Body of pancreas (tissue), 4 donors: ENCODE measurements at regions of chr16 and their contacts with region 1.

Region 1: DNA sequence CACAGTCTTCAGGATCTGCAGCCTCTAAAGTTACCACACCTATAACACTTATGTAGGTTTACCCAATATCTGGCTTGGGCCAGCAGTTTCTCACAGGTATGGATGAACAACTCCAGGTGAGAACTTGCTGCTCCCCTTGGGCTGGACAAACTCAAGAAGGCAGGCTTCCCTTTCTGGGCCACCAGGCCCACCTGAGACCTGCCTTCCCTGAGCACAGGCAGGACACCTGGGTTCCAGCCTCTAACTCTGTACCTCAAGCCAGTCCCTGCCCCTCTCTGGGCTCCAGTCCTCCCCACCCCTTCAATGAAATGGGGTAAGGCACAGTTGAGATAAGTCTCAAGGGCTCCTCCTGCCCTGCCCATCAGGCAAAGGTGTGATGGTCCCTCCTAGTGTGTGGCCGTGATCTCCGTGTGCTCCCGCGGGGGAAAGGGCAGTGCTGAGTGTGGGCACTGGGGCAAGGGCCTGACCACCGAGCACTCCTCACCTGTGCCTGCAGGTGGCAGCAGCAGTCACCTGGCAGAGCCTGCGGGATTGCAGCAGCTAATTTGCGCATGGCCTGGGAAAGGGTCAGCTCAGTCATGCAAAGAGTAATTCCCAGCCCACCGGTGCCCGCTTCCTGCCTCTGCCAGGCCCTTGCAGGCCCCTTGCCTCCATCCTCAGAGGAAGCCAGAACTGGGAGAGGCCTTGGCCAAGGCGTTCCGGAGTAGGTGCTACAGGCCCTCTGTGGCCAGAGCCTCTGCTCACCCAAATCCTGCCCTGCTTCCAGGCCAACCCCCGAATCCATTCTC is 28.2 kb upstream of the ADGRG1 start:
- DNase-seq: peak; percentile 83 to 88 (median 86)
- ATAC-seq: peak; percentile 94
- H3K4me3 ChIP-seq: no peak overlapping the region
- H3K27ac ChIP-seq: no peak overlapping the region
- H3K4me1 ChIP-seq: peaks cover 35% of the 10 kb centered on the region
- H3K27me3 ChIP-seq: no peaks in the 10 kb centered on the region
- CTCF ChIP-seq: peak; percentile 79 to 96 (median 92)
- POLR2A ChIP-seq: no peak

Region 2: DNA sequence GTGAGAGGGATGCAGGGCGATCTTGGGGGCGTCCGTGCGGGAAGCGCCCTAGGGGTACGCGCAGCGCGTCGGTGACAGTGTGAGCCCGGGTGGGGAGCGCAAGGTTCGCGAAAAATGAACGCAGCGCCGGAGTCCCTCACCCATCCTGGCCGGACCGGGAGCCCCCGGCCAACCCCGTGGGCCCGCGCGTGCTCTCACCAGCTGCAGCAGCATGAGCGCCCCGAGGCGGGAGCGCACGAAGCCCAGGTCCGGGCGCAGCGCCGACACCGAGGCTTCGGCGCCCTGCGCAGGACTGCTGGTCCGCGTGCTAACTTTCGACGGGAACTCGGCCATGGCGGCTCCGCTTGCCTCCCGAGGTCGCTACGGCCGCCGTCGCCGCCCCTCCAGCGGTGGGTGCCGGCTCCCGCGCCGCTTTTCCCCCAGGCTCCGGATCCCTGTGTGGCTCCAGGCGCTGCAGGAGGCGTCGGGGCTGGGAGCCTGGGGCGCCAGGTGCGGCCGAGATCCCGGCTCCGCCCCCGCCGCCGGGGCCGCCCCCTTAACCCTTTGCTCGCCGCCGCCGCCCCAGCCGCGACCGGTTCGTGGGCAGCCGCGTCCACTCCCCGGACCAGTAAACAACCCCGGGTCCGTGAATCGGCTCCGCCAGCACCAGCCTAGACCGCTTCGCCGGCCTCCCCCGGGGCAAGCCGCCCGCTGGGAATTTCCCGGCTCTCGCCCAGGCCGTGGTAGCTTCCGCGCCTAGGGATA is 315.9 kb before region 1 on chr16 and contains the start of gene PLLP:
- intact Hi-C with region 1: no loop called
- DNase-seq: peak; percentile 62 to 75 (median 68)
- ATAC-seq: peak; percentile 79
- H3K4me3 ChIP-seq: peak within 1 kb of the TSS; percentile 80 to 90
- H3K27ac ChIP-seq: peak within 1 kb of the TSS; percentile 47 to 84 (median 82)
- H3K4me1 ChIP-seq: peaks cover 44% of the 10 kb centered on the region
- H3K27me3 ChIP-seq: no peaks in the 10 kb centered on the region
- CTCF ChIP-seq: no peak
- POLR2A ChIP-seq: peak; percentile 48 to 58 (median 56)
- total RNA-seq, gene PLLP: 32.9 to 43.2 TPM

Region 3: DNA sequence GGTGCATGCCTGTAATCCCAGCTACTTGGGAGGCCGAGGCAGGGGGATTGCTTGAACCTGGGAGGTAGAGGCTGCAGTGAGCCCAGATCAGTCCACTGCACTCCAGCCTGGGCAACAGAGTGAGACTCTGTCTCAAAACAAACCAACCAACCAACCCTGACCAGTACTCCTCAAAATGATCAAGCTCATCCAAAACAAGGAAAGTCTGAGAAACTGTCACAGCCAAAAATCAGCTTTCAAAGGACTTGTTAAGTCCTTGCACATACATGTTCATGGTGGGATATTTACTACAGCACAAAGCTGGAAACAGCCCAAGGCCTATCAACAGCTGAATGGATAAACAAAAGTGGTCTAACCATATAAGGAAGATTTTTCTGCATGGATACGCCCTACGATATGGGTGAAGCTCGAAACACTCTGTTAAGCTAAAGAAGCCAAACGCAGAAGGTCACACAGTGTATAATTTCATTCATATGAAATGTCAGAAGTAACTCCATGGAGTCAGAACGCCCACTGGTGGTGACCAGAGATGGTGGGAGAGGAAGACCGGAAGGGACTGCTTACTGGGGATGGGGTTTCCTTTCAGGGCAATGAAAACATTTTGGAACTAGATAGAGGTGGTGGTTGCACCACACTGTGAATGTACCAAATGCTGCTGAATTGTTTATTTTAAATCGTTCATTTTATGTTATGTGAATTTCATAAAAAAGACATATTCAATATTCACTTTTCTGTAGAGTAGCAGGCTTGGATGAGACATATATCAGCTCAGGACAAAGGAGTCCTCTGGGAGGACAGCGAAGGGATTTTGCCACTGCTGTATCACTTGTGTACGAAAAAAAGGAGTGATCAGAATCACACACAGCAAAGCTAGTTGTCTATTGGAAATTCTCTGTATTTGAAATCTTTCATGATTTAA is 178.0 kb before region 1 on chr16:
- intact Hi-C with region 1: no loop called
- DNase-seq: peak; percentile 54 to 73 (median 66)
- ATAC-seq: peak; percentile 62
- H3K4me3 ChIP-seq: no peak overlapping the region
- H3K27ac ChIP-seq: no peak overlapping the region
- H3K4me1 ChIP-seq: peaks cover 14% of the 10 kb centered on the region
- H3K27me3 ChIP-seq: no peaks in the 10 kb centered on the region
- CTCF ChIP-seq: peak; percentile 29 to 73 (median 56)
- POLR2A ChIP-seq: no peak

Region 4: DNA sequence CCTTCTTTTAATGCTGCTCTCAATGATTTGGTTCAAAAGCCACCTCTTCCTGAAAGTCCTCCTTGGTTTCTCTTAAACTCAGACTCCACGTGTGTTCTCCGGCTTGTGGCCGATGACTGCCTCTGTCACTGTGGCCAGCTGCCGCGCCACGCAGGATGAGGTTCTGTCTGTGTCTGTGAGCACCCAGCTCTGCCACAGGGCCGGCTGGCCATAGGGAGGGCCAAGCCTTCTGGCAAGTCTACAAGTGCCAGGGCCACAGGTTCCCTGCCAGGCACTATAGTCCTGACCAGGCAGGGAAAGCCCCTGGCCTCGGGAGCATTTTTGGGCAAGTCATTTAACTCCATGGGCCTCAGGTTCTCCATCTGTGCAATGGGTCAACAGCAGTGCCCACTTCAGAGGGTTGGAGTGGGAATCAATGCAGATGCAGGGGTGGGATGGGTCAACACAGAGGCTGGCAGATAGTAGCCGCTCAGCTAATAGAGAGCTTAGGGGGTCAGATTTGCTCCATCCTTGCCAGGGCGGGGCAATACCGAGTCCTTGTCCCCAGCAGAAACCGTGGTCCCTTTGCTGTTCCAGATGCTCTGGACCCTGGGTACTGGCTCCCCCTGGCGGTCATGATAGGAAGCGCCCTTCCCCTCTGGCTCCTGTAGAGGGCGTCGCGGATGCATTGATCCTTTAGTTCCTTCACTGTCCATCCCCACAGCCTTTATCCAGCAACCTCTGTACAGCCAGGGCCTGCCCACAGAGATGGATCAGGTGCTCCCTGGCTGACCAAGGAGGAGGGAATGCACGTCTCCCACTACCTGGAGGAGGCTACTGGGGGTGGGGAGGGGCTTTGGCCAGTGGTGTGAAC is 48.6 kb after region 1 on chr16:
- intact Hi-C with region 1: loop called (anchors 2 kb)
- DNase-seq: peak; percentile 78 to 89 (median 84)
- ATAC-seq: peak; percentile 84
- H3K4me3 ChIP-seq: no peak overlapping the region
- H3K27ac ChIP-seq: peak overlapping the region in 2 of 4 donors; percentile 6 to 42
- H3K4me1 ChIP-seq: peaks cover 6% of the 10 kb centered on the region
- H3K27me3 ChIP-seq: no peaks in the 10 kb centered on the region
- CTCF ChIP-seq: peak; percentile 99 to 100 (median 100)
- POLR2A ChIP-seq: no peak

Region 5: DNA sequence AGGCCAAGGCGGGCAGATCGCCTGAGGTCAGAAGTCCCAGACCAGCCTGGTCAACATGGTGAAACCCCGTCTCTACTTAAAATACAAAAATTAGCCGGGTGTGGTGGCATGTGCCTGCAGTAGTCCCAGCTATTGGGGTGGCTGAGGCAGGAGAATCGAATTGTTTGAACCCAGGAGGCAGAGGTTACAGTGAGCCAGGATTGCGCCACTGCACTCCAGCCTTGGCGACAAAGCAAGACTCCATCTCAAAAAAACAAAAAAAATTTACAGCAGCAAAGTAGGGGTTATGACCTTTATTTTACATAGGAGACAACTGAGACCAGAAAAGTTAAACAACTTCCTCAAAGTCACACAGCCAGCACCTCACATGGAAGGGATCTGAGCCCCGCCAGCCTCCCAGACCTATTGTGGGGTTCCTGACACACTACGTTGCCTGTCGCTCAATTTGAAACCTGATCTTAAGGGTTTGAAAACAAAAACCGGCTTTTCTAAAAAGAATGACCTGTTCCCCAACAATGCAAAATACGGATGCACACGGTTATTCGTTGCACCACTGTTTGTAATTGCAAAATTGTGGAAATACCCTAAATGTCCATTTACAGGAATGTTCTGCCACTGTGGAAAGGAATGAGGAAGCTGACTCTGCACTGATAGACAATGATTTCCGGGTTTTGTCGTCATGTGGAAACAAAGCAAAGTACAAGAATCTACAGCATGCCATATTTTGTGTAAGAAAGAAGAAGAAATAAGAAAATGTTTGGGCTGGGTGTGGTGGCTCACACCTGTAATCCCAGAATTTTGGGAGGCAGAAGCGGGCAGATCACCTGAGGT is 293.5 kb after region 1 on chr16:
- intact Hi-C with region 1: no loop called
- DNase-seq: peak; percentile 25 to 69 (median 40)
- ATAC-seq: peak; percentile 83
- H3K4me3 ChIP-seq: no peak overlapping the region
- H3K27ac ChIP-seq: peak overlapping the region; percentile 46 to 94 (median 84)
- H3K4me1 ChIP-seq: peaks cover 41% of the 10 kb centered on the region
- H3K27me3 ChIP-seq: no peaks in the 10 kb centered on the region
- CTCF ChIP-seq: no peak
- POLR2A ChIP-seq: peak in 1 of 3 donors; percentile 10